ENCODE measurements at regions of chr4 and their contacts with region 1.

Region 1: DNA sequence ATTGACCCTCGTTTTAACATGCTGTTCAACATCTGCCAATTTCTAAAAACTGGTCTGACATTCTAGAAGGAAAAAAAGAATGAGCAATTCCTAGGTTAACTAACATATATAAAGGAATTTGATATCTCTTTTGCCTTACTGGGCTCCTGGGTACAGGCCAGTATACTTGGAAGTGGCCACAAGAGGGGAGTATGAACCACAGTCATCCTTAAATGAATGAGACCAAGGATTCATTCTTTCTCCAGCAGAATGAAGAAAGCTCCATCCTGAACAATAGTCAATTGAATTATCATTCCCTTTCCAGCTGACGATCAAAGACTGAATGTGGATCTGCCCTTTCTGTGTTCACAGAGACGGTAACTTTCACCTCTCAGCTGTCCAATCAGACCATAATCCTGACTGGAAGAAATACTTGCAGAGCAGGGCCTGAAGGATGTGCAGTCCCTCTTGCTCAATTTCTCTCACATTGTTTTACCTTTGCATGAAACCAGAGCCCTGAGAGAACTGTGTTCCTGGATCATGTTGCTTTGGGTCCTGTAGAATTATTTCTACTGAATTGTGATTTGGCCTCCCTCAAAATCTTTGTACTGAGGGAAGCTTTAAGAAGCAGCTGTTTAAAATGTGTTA is 14.8 kb upstream of the SPARCL1 start:
- DNase-seq: peak; percentile 74
- H3K4me3 Mint-ChIP-seq: no peak overlapping the region
- H3K27ac Mint-ChIP-seq: no peak overlapping the region
- H3K4me1 Mint-ChIP-seq: no peaks in the 10 kb centered on the region
- H3K27me3 Mint-ChIP-seq: no peaks in the 10 kb centered on the region
- CTCF ChIP-seq: peak; percentile 53

Region 2: DNA sequence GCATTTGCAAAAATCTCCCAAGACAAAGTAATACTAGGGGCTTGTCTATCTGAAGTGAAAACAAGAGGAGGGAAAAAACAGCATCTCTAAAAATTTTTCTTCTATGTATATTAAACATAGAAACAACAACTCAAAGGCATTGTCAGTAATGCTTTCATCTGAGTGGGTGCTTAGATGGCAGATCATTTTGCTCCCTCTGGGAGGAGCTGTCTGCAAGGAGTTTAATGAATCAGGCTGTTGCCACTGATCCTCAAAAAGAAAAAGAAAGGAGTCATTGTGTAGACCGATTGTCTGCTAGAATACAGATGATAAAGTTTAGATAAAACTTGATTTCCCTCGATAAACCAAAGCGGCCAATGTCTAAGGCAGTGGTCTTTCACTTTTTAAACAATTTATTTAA is 273.8 kb before region 1 on chr4:
- CTCF ChIA-PET with region 1: no interaction called
- POLR2A ChIA-PET with region 1: no interaction called
- intact Hi-C with region 1: loop called (anchors 5 kb)
- DNase-seq: peak; percentile 63
- H3K4me3 Mint-ChIP-seq: no peak overlapping the region
- H3K27ac Mint-ChIP-seq: no peak overlapping the region
- H3K4me1 Mint-ChIP-seq: no peaks in the 10 kb centered on the region
- H3K27me3 Mint-ChIP-seq: no peaks in the 10 kb centered on the region
- CTCF ChIP-seq: peak; percentile 59

Region 3: DNA sequence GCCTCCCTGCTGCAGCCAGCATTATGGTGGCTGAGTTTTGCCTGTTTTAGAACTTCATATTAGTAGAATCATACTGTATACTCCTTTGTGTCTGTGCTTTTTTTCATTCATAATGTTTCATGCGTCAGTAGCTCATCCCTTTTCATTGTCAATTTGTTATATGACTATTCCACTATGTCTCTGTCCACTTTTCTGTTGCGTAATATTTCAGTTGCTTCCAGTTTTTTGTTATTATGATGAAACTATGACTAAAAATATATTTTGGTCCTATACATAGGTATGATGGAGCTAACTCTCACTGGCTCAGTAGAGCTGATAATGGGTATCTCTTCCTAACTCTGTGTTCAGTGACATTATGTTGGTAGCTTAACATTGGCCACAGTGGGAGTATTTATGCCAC is 154.4 kb after region 1 on chr4:
- CTCF ChIA-PET with region 1: no interaction called
- POLR2A ChIA-PET with region 1: no interaction called
- intact Hi-C with region 1: no loop called
- DNase-seq: peak; percentile 13
- H3K4me3 Mint-ChIP-seq: no peak overlapping the region
- H3K27ac Mint-ChIP-seq: no peak overlapping the region
- H3K4me1 Mint-ChIP-seq: no peaks in the 10 kb centered on the region
- H3K27me3 Mint-ChIP-seq: no peaks in the 10 kb centered on the region
- CTCF ChIP-seq: no peak

Region 4: DNA sequence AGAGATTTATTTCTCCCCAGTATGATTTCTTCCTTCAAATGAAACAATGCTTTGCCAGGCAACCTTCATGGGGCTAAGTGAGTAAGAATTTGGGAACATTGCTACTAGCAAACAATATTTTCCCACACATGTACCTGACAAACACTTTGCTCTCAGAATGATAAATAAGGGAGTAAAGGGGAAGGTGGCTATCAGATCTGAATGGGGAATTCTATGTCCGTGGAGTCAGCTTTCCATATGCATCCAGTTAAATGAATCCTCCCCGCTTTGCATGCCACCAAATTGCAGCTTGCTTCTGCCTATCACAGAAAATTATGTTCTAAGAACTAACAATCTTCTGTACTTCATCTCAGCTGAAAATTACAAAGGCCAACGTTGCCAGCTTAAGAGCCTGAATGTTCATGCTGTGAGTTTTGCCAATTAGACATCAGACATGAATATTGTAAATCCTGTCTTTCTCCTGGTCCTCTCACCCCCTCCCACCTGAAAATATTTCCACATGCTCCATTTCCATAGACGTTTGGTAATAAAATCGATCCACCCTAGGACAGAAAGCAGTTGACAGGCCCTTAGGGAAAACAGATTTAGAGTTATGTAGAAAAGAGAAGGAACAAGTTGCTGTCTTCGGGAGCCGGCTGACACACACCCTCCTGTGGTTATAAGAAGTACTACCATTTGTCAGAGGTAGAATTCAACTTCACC is 295.1 kb after region 1 on chr4:
- CTCF ChIA-PET with region 1: interaction called, 43 read pairs
- POLR2A ChIA-PET with region 1: interaction called, 3 read pairs
- intact Hi-C with region 1: loop called (anchors 1 kb)
- DNase-seq: peak; percentile 49
- H3K4me3 Mint-ChIP-seq: no peak overlapping the region
- H3K27ac Mint-ChIP-seq: no peak overlapping the region
- H3K4me1 Mint-ChIP-seq: peaks cover 10% of the 10 kb centered on the region
- H3K27me3 Mint-ChIP-seq: no peaks in the 10 kb centered on the region
- CTCF ChIP-seq: peak; percentile 75